ENCODE measurements at regions of chr4 and their contacts with region 1.

Region 1: DNA sequence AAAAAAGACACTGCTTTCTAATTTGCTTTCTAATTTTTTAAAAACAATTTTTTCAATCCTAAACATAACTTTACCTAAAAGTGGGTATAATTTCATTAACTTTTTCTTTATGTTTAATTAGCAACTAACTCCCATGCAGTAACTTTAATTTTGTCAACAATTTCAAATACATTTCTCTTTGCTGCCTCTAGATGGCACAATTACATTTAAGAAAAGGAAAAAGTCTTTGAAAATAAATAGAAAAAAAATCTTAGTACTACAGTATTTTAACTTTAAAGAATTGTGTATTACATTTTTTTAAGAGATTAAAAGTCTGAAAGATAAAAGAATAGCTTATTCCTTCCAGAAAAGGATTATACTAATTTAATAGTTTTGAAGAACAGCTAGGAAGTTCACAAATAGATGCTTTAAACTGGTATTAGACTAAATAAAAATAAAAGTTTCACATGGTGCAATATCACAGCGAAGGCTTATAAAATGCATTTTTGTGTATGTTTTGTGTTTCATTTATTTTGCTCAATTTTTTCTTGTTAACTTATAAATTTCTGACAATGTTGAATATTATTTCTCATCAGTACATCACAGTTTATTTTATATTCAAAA is 105.1 kb downstream of the ADGRA3 start:
- H3K4me3 ChIP-seq: no peak overlapping the region
- H3K27ac ChIP-seq: no peak overlapping the region
- H3K4me1 ChIP-seq: no peaks in the 10 kb centered on the region
- CTCF ChIP-seq: no peak

Region 2: DNA sequence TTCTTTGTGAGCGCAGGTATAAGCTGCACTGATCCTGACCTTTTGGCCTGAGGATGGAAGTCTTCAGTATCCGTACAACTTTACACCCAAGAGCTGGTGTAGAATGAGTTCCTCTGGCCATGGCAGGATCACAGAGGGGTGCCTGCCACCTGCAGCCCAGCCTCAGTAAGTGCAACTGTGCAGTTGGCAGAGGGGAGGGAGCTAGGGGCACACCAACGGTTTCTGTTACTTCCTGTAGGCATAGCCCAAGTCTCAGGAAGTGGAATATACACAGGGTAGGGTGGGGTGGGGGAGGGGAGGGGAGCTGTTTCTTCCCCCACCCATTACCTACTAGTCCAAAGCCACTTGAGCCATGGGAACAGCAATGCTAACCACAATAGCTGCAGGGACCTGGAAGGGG is 196.6 kb after region 1 on chr4:
- CTCF ChIA-PET with region 1: interaction called, 16 read pairs
- POLR2A ChIA-PET with region 1: no interaction called
- H3K4me3 ChIP-seq: no peak overlapping the region
- H3K27ac ChIP-seq: no peak overlapping the region
- H3K4me1 ChIP-seq: no peaks in the 10 kb centered on the region
- CTCF ChIP-seq: no peak

Measured in HEK293 (cell line).